HepG2 (cell line): ENCODE measurements at regions of chr10 and their contacts with region 1.

Region 1: DNA sequence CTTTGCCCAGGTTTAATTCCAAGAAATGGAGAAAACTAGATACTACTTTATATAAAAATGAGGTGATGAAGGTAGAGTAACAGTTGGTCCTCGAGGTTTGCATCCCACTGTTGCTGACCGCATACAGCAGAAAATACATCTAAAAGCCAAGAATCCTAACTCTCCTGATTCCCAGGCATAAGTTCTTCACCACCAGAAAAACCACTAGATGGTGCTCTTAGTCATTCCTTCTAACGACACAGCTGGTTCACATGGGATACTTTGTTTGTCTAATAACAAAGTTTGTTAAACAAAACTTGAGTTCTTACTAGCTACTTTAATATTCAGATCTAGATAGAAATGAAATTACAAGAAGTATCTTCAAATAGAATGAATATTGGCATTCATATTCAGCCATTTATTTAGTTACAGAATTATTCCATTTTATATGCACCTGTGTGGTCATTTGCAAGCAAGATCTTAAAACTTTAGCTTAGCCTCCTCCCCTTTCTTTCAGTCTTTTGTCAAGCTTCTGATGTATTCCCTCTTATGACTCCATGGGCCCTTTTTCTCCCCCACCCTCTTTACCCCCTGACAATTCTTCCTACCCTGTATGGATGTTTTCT is 54.1 kb upstream of the CYP26C1 start:
- DNase-seq: peak; percentile 43
- ATAC-seq: peak; percentile 78
- H3K4me3 ChIP-seq: no peak overlapping the region
- H3K27ac ChIP-seq: no peak overlapping the region
- H3K4me1 ChIP-seq: no peaks in the 10 kb centered on the region
- H3K27me3 ChIP-seq: no peaks in the 10 kb centered on the region
- CTCF ChIP-seq: peak; percentile 79
- EP300 ChIP-seq: no peak
- POLR2A ChIP-seq: no peak
- RAD21 ChIP-seq: peak; percentile 61

Region 2: GRCh38 chr10:93026072-93026471 is 19.5 kb after region 1 on chr10:
- CTCF ChIA-PET with region 1: no interaction called
- POLR2A ChIA-PET with region 1: no interaction called
- in situ Hi-C with region 1: no loop called
- intact Hi-C with region 1: loop called (anchors 1 kb)
- DNase-seq: no peak
- ATAC-seq: no peak
- H3K4me3 ChIP-seq: no peak overlapping the region
- H3K27ac ChIP-seq: no peak overlapping the region
- H3K4me1 ChIP-seq: peaks cover 20% of the 10 kb centered on the region
- H3K27me3 ChIP-seq: no peaks in the 10 kb centered on the region
- CTCF ChIP-seq: no peak
- EP300 ChIP-seq: no peak
- POLR2A ChIP-seq: no peak
- RAD21 ChIP-seq: no peak

Region 3: GRCh38 chr10:93039721-93040120 is 33.2 kb after region 1 on chr10:
- CTCF ChIA-PET with region 1: interaction called, 3 read pairs
- POLR2A ChIA-PET with region 1: no interaction called
- in situ Hi-C with region 1: no loop called
- intact Hi-C with region 1: loop called (anchors 1 kb)
- DNase-seq: peak; percentile 31
- ATAC-seq: peak; percentile 67
- H3K4me3 ChIP-seq: no peak overlapping the region
- H3K27ac ChIP-seq: no peak overlapping the region
- H3K4me1 ChIP-seq: no peaks in the 10 kb centered on the region
- H3K27me3 ChIP-seq: no peaks in the 10 kb centered on the region
- CTCF ChIP-seq: peak; percentile 54
- EP300 ChIP-seq: no peak
- POLR2A ChIP-seq: no peak
- RAD21 ChIP-seq: peak; percentile 61

Region 4: GRCh38 chr10:93074147-93074596 is 67.6 kb after region 1 on chr10:
- CTCF ChIA-PET with region 1: no interaction called
- POLR2A ChIA-PET with region 1: no interaction called
- in situ Hi-C with region 1: no loop called
- intact Hi-C with region 1: loop called (anchors 2 kb)
- DNase-seq: no peak
- ATAC-seq: peak; percentile 39
- H3K4me3 ChIP-seq: peak overlapping the region; percentile 56 to 77 (median 58); a peak in 5 of 6 replicates
- H3K27ac ChIP-seq: no peak overlapping the region
- H3K4me1 ChIP-seq: peaks cover 36% of the 10 kb centered on the region
- H3K27me3 ChIP-seq: peaks cover 11 to 56% of the 10 kb centered on the region in 2 experiments; a peak in 4 of 5 replicates
- CTCF ChIP-seq: peak; percentile 47
- EP300 ChIP-seq: no peak
- POLR2A ChIP-seq: no peak
- RAD21 ChIP-seq: no peak

Region 5: GRCh38 chr10:93352638-93353383 is 346.3 kb after region 1 on chr10:
- CTCF ChIA-PET with region 1: interaction called, 9 read pairs
- POLR2A ChIA-PET with region 1: no interaction called
- in situ Hi-C with region 1: loop called (anchors 10 kb)
- intact Hi-C with region 1: loop called (anchors 5 kb)
- DNase-seq: peak; percentile 42
- ATAC-seq: no peak
- H3K4me3 ChIP-seq: no peak overlapping the region
- H3K27ac ChIP-seq: no peak overlapping the region
- H3K4me1 ChIP-seq: no peaks in the 10 kb centered on the region
- H3K27me3 ChIP-seq: no peaks in the 10 kb centered on the region
- CTCF ChIP-seq: peak; percentile 57
- EP300 ChIP-seq: no peak
- POLR2A ChIP-seq: no peak
- RAD21 ChIP-seq: peak; percentile 26; the same call in 1 of the 2 replicates

Region 6: DNA sequence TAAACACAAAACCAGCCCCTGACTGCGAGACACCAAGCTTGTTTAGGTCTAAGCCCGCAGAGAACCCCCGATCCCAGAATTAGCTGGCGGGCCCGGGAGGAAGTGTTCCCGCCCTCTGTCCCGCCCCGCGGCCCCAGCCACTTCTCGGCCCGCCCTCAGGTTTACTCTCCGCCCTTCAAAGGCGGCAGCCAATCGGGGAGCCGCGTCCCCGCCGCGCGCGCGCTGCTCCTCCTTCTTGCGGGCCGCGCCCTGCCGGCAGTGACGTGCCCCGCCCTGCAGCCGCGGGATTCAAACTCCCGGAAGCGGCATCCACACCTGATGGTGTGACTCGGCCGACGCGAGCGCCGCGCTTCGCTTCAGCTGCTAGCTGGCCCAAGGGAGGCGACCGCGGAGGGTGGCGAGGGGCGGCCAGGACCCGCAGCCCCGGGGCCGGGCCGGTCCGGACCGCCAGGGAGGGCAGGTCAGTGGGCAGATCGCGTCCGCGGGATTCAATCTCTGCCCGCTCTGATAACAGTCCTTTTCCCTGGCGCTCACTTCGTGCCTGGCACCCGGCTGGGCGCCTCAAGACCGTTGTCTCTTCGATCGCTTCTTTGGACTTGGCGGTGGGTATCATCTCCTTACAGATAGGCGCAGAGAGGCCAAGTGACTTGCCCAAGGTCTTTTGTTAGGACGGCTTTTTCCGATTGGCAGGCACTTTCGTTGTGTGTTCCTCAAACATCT is 489.9 kb after region 1 on chr10 and contains the start of gene CEP55:
- CTCF ChIA-PET with region 1: no interaction called
- POLR2A ChIA-PET with region 1: no interaction called
- in situ Hi-C with region 1: no loop called
- intact Hi-C with region 1: no loop called
- DNase-seq: peak; percentile 86
- ATAC-seq: peak; percentile 99
- H3K4me3 ChIP-seq: peak within 1 kb of the TSS; percentile 75 to 87 (median 77)
- H3K27ac ChIP-seq: peak within 1 kb of the TSS; percentile 57
- H3K4me1 ChIP-seq: peaks cover 40% of the 10 kb centered on the region
- H3K27me3 ChIP-seq: no peaks in the 10 kb centered on the region; a peak in 2 of 5 replicates
- CTCF ChIP-seq: no peak; the same call in 1 of the 2 replicates
- EP300 ChIP-seq: no peak
- POLR2A ChIP-seq: peak; percentile 43 to 60; a peak in 3 of 4 replicates
- RAD21 ChIP-seq: 0 out of 2 replicates have a peak, but pooled peaks have one; percentile 25
- total RNA-seq, gene CEP55: 17.1 and 27.3 TPM in 2 replicates